ENCODE measurements at regions of chr6 and their contacts with region 1.

Region 1: GRCh38 chr6:26122793-26123674 is 35.8 kb downstream of the HFE start:
- DNase-seq: peak; percentile 68
- ATAC-seq: peak; percentile 60
- H3K4me3 Mint-ChIP-seq: peak overlapping the region; percentile 94
- H3K27ac Mint-ChIP-seq: peak overlapping the region; percentile 99
- H3K4me1 Mint-ChIP-seq: peaks cover 34% of the 10 kb centered on the region
- H3K27me3 Mint-ChIP-seq: no peaks in the 10 kb centered on the region
- CTCF ChIP-seq: no peak

Region 2: GRCh38 chr6:25735261-25735660 is 387.8 kb before region 1 on chr6:
- CTCF ChIA-PET with region 1: no interaction called
- POLR2A ChIA-PET with region 1: no interaction called
- intact Hi-C with region 1: no loop called
- DNase-seq: no peak
- ATAC-seq: no peak
- H3K4me3 Mint-ChIP-seq: no peak overlapping the region
- H3K27ac Mint-ChIP-seq: no peak overlapping the region
- H3K4me1 Mint-ChIP-seq: no peaks in the 10 kb centered on the region
- H3K27me3 Mint-ChIP-seq: peaks cover 41% of the 10 kb centered on the region
- CTCF ChIP-seq: no peak

Region 3: DNA sequence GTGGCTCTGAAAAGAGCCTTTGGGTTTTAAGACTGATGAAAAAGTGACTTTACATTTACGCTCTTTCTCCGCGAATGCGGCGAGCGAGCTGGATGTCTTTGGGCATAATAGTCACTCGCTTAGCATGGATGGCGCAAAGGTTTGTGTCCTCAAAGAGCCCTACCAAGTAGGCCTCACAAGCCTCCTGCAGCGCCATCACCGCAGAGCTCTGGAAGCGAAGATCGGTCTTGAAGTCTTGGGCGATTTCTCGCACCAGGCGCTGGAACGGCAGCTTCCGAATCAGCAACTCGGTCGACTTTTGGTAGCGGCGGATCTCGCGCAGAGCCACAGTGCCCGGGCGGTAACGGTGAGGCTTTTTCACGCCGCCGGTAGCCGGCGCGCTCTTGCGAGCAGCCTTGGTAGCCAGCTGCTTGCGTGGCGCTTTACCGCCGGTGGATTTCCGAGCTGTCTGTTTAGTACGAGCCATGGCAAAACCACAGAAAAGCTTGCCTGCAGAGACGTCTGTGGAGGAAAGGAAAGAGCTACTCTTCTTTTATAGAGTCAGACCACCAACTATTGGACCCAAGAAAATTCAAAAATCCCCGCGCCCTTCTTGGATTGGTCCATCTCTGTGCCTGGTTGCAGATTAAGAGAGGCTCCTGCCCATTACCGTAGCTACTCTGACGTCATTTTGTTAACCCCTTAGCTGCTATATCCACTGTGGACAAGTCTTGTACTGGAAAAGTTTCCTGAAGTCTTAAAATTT is 91.3 kb before region 1 on chr6:
- CTCF ChIA-PET with region 1: no interaction called
- POLR2A ChIA-PET with region 1: interaction called, 78 read pairs
- intact Hi-C with region 1: loop called (anchors 1 kb)
- DNase-seq: peak; percentile 55
- ATAC-seq: peak; percentile 62
- H3K4me3 Mint-ChIP-seq: peak overlapping the region; percentile 93
- H3K27ac Mint-ChIP-seq: peak overlapping the region; percentile 98
- H3K4me1 Mint-ChIP-seq: peaks cover 40% of the 10 kb centered on the region
- H3K27me3 Mint-ChIP-seq: peaks cover 2% of the 10 kb centered on the region
- CTCF ChIP-seq: no peak

Region 4: GRCh38 chr6:26097268-26097875 is 25.7 kb before region 1 on chr6:
- CTCF ChIA-PET with region 1: no interaction called
- POLR2A ChIA-PET with region 1: interaction called, 253 read pairs
- intact Hi-C with region 1: no loop called
- DNase-seq: no peak
- ATAC-seq: peak; percentile 81
- H3K4me3 Mint-ChIP-seq: no peak overlapping the region
- H3K27ac Mint-ChIP-seq: no peak overlapping the region
- H3K4me1 Mint-ChIP-seq: peaks cover 16% of the 10 kb centered on the region
- H3K27me3 Mint-ChIP-seq: no peaks in the 10 kb centered on the region
- CTCF ChIP-seq: no peak

Region 5: DNA sequence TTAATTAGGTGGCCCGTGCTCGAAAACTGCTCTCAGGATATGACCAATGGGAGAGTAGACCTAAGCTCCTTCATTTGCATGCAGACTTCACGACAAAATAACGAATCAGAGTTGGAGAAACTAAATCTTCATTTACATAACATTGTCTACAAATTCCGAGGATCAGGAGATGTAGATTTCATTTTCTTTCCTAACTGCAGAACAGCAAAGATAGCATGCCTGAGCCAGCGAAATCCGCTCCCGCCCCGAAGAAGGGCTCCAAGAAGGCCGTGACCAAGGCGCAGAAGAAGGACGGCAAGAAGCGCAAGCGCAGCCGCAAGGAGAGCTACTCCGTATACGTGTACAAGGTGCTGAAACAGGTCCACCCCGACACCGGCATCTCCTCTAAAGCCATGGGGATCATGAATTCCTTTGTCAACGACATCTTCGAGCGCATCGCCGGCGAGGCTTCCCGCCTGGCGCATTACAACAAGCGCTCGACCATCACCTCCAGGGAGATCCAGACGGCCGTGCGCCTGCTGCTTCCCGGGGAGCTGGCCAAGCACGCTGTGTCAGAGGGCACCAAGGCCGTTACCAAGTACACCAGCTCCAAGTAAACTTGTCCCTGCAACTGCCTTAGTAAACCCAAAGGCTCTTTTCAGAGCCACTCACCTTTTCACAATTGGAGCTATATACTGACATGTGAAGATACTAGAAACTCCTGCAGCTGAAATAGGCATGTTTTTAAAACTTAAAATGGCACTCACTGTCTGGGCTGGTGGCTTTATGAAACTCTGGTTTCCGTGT is 60.7 kb after region 1 on chr6:
- CTCF ChIA-PET with region 1: interaction called, 4 read pairs
- POLR2A ChIA-PET with region 1: interaction called, 121 read pairs
- intact Hi-C with region 1: no loop called
- DNase-seq: peak; percentile 60
- ATAC-seq: peak; percentile 86
- H3K4me3 Mint-ChIP-seq: peak overlapping the region; percentile 98
- H3K27ac Mint-ChIP-seq: peak overlapping the region; percentile 91
- H3K4me1 Mint-ChIP-seq: peaks cover 30% of the 10 kb centered on the region
- H3K27me3 Mint-ChIP-seq: no peaks in the 10 kb centered on the region
- CTCF ChIP-seq: no peak

Region 6: GRCh38 chr6:26234421-26235296 is 111.6 kb after region 1 on chr6:
- CTCF ChIA-PET with region 1: no interaction called
- POLR2A ChIA-PET with region 1: interaction called, 82 read pairs
- intact Hi-C with region 1: no loop called
- DNase-seq: peak; percentile 49
- ATAC-seq: peak; percentile 77
- H3K4me3 Mint-ChIP-seq: peak overlapping the region; percentile 89
- H3K27ac Mint-ChIP-seq: peak overlapping the region; percentile 97
- H3K4me1 Mint-ChIP-seq: peaks cover 26% of the 10 kb centered on the region
- H3K27me3 Mint-ChIP-seq: no peaks in the 10 kb centered on the region
- CTCF ChIP-seq: no peak

Region 7: GRCh38 chr6:27146706-27147505 is 1023.9 kb after region 1 on chr6:
- CTCF ChIA-PET with region 1: no interaction called
- POLR2A ChIA-PET with region 1: interaction called, 82 read pairs
- intact Hi-C with region 1: loop called (anchors 2 kb)
- DNase-seq: peak; percentile 70
- ATAC-seq: peak; percentile 80
- H3K4me3 Mint-ChIP-seq: no peak overlapping the region
- H3K27ac Mint-ChIP-seq: no peak overlapping the region
- H3K4me1 Mint-ChIP-seq: peaks cover 26% of the 10 kb centered on the region
- H3K27me3 Mint-ChIP-seq: no peaks in the 10 kb centered on the region
- CTCF ChIP-seq: no peak

Region 8: GRCh38 chr6:27871924-27872638 is 1749.0 kb after region 1 on chr6:
- CTCF ChIA-PET with region 1: no interaction called
- POLR2A ChIA-PET with region 1: interaction called, 24 read pairs
- intact Hi-C with region 1: no loop called
- DNase-seq: peak; percentile 73
- ATAC-seq: peak; percentile 80
- H3K4me3 Mint-ChIP-seq: peak overlapping the region; percentile 94
- H3K27ac Mint-ChIP-seq: peak overlapping the region; percentile 95
- H3K4me1 Mint-ChIP-seq: peaks cover 36% of the 10 kb centered on the region
- H3K27me3 Mint-ChIP-seq: no peaks in the 10 kb centered on the region
- CTCF ChIP-seq: no peak

Measured in activated B cell treated with CpG ODN at 0.5 μM for 24 hours (primary cell).